ENCODE measurements at regions of chr11 and their contacts with region 1.

Region 1: GRCh38 chr11:114262681-114263512 is 33.3 kb upstream of the NNMT start:
- DNase-seq: peak in 6 of 9 donors; percentile 10 to 41 (median 27)
- ATAC-seq: peak; percentile 56
- H3K4me3 ChIP-seq: no peak overlapping the region
- H3K4me3 Mint-ChIP-seq: no peak overlapping the region
- H3K27ac ChIP-seq: no peak overlapping the region
- H3K27ac Mint-ChIP-seq: no peak overlapping the region
- H3K4me1 ChIP-seq: no peaks in the 10 kb centered on the region
- H3K4me1 Mint-ChIP-seq: peaks cover 0 to 7% (median 4%) of the 10 kb centered on the region in 7 donors
- H3K27me3 ChIP-seq: no peaks in the 10 kb centered on the region
- H3K27me3 Mint-ChIP-seq: peaks cover 0 to 5% (median 3%) of the 10 kb centered on the region in 5 donors

Region 2: DNA sequence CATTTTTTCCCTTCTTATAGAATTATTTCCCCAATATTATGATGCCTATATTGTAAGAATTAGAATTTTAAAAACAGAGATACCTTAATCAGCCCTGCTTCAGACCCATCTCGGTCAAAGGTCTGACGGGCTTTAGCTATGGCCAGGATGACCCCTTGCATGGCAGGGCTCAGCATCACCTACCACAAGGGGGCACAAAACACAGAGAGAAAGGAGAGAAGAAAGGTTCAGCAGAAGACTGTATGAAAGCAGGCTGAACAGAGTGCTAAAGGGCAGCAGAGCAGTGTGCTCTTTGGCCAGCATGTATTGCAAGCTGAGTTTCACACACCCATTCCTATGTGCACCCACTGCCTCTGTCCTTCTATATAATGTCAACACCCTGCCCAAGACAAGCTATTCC is 456.5 kb before region 1 on chr11:
- CTCF ChIA-PET with region 1: no interaction called
- POLR2A ChIA-PET with region 1: no interaction called
- intact Hi-C with region 1: loop called (anchors 1 kb)
- DNase-seq: no peak
- ATAC-seq: no peak
- H3K4me3 ChIP-seq: no peak overlapping the region
- H3K4me3 Mint-ChIP-seq: no peak overlapping the region
- H3K27ac ChIP-seq: no peak overlapping the region
- H3K27ac Mint-ChIP-seq: no peak overlapping the region
- H3K4me1 ChIP-seq: no peaks in the 10 kb centered on the region
- H3K4me1 Mint-ChIP-seq: peaks cover 0 to 2% (median 0%) of the 10 kb centered on the region in 7 donors
- H3K27me3 ChIP-seq: no peaks in the 10 kb centered on the region
- H3K27me3 Mint-ChIP-seq: no peaks in the 10 kb centered on the region

Region 3: DNA sequence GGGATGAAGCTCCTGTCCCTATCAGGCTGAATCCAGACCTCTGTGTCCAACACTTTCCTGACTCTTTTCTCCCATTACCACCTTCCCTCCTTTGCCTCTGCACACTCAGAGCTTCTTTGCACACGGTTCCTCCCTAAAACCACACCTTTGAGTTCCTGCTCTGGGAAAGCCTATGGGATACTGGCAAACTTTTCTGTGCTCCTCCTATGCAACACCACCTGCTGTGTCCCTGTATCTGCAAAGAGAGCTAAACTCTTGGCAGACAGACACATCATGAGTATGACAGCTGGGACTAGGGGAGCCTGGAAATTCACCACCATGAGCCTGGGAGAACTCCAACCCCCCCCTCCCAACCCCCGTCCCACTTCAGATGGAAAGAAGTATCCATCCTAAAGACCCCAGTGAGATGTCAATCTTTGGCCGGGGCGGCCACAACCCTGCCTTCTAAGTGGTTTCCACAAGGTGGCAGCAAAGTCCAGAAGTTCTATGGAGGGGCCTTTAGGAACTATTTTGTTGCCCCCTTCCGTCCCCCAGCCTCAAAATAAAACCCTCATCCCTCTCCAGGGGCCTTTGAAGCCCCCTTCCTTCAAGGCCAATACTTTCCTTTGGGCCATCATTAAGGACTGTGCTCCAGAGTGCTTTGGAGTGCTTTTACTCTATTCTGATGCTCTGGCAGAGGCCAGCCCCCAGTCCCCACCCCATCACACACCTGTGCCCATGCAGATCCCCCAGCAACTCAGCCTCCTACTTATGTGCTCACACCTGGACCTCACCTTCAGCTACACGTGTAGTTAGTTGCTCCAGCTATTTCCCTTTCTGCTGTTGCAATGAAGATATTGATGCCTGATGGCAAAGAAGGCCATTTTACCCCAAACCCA is 268.6 kb before region 1 on chr11:
- CTCF ChIA-PET with region 1: interaction called, 117 read pairs
- POLR2A ChIA-PET with region 1: interaction called, 5 read pairs
- intact Hi-C with region 1: loop called (anchors 1 kb)
- DNase-seq: peak in 6 of 9 donors; percentile 12 to 50 (median 24)
- ATAC-seq: peak; percentile 57
- H3K4me3 ChIP-seq: no peak overlapping the region
- H3K4me3 Mint-ChIP-seq: no peak overlapping the region
- H3K27ac ChIP-seq: no peak overlapping the region
- H3K27ac Mint-ChIP-seq: no peak overlapping the region
- H3K4me1 ChIP-seq: no peaks in the 10 kb centered on the region
- H3K4me1 Mint-ChIP-seq: peaks cover 0 to 12% (median 5%) of the 10 kb centered on the region in 7 donors
- H3K27me3 ChIP-seq: no peaks in the 10 kb centered on the region
- H3K27me3 Mint-ChIP-seq: peaks cover 2 to 43% (median 29%) of the 10 kb centered on the region in 5 donors

Region 4: GRCh38 chr11:114026355-114026754 is 236.5 kb before region 1 on chr11:
- CTCF ChIA-PET with region 1: interaction called, 148 read pairs
- POLR2A ChIA-PET with region 1: no interaction called
- intact Hi-C with region 1: loop called in 1 of 2 experiments (anchors 2 kb)
- DNase-seq: peak in 7 of 9 donors; percentile 7 to 32 (median 22)
- ATAC-seq: peak; percentile 72
- H3K4me3 ChIP-seq: no peak overlapping the region
- H3K4me3 Mint-ChIP-seq: no peak overlapping the region
- H3K27ac ChIP-seq: no peak overlapping the region
- H3K27ac Mint-ChIP-seq: no peak overlapping the region
- H3K4me1 ChIP-seq: no peaks in the 10 kb centered on the region
- H3K4me1 Mint-ChIP-seq: peaks cover 0 to 16% (median 8%) of the 10 kb centered on the region in 7 donors
- H3K27me3 ChIP-seq: peaks cover 0 to 3% of the 10 kb centered on the region in 2 donors
- H3K27me3 Mint-ChIP-seq: peaks cover 0 to 25% (median 12%) of the 10 kb centered on the region in 5 donors

Region 5: GRCh38 chr11:114059278-114059983 is 203.5 kb before region 1 on chr11 and contains the start of gene ZBTB16:
- CTCF ChIA-PET with region 1: interaction called, 5 read pairs
- POLR2A ChIA-PET with region 1: no interaction called
- intact Hi-C with region 1: loop called (anchors 1 kb)
- DNase-seq: peak; percentile 37 to 72 (median 58)
- ATAC-seq: peak; percentile 74
- H3K4me3 ChIP-seq: peak within 1 kb of the TSS; percentile 70
- H3K4me3 Mint-ChIP-seq: peak within 1 kb of the TSS; percentile 89 to 95 (median 92)
- H3K27ac ChIP-seq: peak within 1 kb of the TSS; percentile 14
- H3K27ac Mint-ChIP-seq: peak within 1 kb of the TSS in 8 of 9 donors; percentile 21 to 81 (median 55)
- H3K4me1 ChIP-seq: peaks cover 0 to 10% of the 10 kb centered on the region in 2 donors
- H3K4me1 Mint-ChIP-seq: peaks cover 0 to 10% (median 7%) of the 10 kb centered on the region in 7 donors
- H3K27me3 ChIP-seq: no peaks in the 10 kb centered on the region
- H3K27me3 Mint-ChIP-seq: peaks cover 16 to 76% (median 24%) of the 10 kb centered on the region in 5 donors
- total RNA-seq, gene ZBTB16: 3.0 to 22.1 (median 7.2) TPM

Region 6: GRCh38 chr11:114197799-114198500 is 64.9 kb before region 1 on chr11:
- CTCF ChIA-PET with region 1: interaction called, 29 read pairs
- POLR2A ChIA-PET with region 1: no interaction called
- intact Hi-C with region 1: loop called in 1 of 2 experiments (anchors 1 kb)
- DNase-seq: no peak
- ATAC-seq: no peak
- H3K4me3 ChIP-seq: no peak overlapping the region
- H3K4me3 Mint-ChIP-seq: no peak overlapping the region
- H3K27ac ChIP-seq: no peak overlapping the region
- H3K27ac Mint-ChIP-seq: no peak overlapping the region
- H3K4me1 ChIP-seq: peaks cover 0 to 5% of the 10 kb centered on the region in 2 donors
- H3K4me1 Mint-ChIP-seq: peaks cover 6 to 30% (median 25%) of the 10 kb centered on the region in 7 donors
- H3K27me3 ChIP-seq: no peaks in the 10 kb centered on the region
- H3K27me3 Mint-ChIP-seq: no peaks in the 10 kb centered on the region

Region 7: GRCh38 chr11:114622858-114623257 is 360.0 kb after region 1 on chr11:
- CTCF ChIA-PET with region 1: no interaction called
- POLR2A ChIA-PET with region 1: no interaction called
- intact Hi-C with region 1: no loop called
- DNase-seq: no peak
- ATAC-seq: no peak
- H3K4me3 ChIP-seq: no peak overlapping the region
- H3K4me3 Mint-ChIP-seq: no peak overlapping the region
- H3K27ac ChIP-seq: no peak overlapping the region
- H3K27ac Mint-ChIP-seq: no peak overlapping the region
- H3K4me1 ChIP-seq: no peaks in the 10 kb centered on the region
- H3K4me1 Mint-ChIP-seq: no peaks in the 10 kb centered on the region
- H3K27me3 ChIP-seq: no peaks in the 10 kb centered on the region
- H3K27me3 Mint-ChIP-seq: peaks cover 0 to 6% (median 0%) of the 10 kb centered on the region in 5 donors